PC-3 (cell line): ENCODE measurements at regions of chr2 and their contacts with region 1.

Region 1: DNA sequence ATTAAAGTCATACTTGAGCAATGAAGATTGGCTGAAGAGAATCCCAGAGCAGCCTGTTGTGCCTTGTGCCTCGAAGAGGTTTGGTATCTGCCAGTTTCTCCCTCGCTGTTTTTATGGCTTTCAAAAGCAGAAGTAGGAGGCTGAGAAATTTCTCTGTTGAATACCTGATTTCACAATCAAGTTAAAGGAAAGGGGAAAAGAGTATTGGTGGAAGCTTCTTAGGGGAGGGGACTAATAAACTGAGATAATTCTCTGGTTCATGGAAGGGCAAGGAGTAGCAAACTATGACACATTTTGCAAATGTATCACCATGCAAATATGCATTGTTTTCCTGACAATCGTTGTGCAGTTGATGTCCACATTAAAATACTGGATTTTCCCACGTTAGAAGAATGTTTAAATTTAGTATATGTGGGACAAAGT is at the start of gene IL1B:
- DNase-seq: peak; percentile 95
- ATAC-seq: peak; percentile 86
- H3K4me3 ChIP-seq: peak within 1 kb of the TSS; percentile 62
- H3K27ac ChIP-seq: peak within 1 kb of the TSS; percentile 96
- H3K4me1 ChIP-seq: peaks cover 52% of the 10 kb centered on the region
- H3K27me3 ChIP-seq: no peaks in the 10 kb centered on the region
- CTCF ChIP-seq: no peak
- total RNA-seq, gene IL1B: 48.4 and 67.5 TPM in 2 replicates

Region 2: GRCh38 chr2:112724591-112725525 is 111.8 kb before region 1 on chr2:
- CTCF ChIA-PET with region 1: no interaction called
- POLR2A ChIA-PET with region 1: no interaction called
- intact Hi-C with region 1: no loop called
- DNase-seq: peak; percentile 35
- ATAC-seq: peak; percentile 26; the same call in 1 of the 2 replicates
- H3K4me3 ChIP-seq: no peak overlapping the region
- H3K27ac ChIP-seq: peak overlapping the region; percentile 82
- H3K4me1 ChIP-seq: peaks cover 16% of the 10 kb centered on the region
- H3K27me3 ChIP-seq: no peaks in the 10 kb centered on the region
- CTCF ChIP-seq: peak; percentile 56

Region 3: DNA sequence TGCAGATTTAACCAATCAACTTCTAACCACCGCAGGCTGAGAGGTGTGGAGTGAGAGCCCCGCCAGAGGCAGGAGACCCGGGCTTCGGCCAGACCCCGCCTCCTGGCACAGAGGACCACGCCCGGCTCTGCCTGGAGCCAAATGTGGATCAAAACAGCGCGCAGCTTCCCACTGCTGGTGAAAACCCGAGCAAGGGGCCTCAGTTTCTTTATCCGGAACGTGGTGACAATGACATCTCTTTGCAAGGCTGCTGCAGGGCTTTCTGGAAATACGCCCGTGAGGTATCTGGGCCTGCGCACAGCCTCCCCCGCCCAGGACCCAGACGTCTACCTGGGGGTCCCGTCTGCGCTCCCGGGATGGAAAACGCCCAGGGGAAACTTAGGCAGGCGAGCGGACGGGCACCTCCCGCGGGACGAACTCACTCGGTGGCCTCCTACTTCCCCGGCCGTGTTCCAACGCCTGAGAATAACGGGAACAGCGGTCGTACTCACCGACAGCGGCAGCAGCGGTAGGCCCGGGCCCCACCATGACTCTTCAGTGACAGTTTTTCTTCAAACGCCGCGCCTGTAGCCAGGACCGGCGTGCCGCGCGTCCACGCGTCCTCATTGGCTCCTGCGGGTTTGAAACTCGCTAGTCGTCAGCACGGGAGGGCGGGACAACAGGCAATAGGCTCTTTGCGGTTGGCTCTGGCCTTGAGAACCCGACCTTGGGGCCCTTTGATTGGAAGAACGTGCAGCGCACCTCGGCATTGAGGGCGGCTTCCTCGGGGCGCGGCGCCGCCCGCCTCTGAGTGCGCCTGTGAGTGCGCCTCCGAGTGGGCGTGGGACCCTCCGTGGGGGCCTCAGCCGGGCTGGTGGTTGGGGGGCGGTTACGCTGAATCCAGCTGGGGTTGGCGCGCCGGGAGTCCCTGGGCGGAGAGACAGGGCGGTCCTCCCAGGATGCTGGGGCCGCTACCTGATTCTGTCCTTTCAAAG is 72.3 kb before region 1 on chr2 and contains the start of gene CKAP2L:
- CTCF ChIA-PET with region 1: no interaction called
- POLR2A ChIA-PET with region 1: no interaction called
- intact Hi-C with region 1: loop called (anchors 1 kb)
- DNase-seq: peak; percentile 99
- ATAC-seq: peak; percentile 92
- H3K4me3 ChIP-seq: peak within 1 kb of the TSS; percentile 92
- H3K27ac ChIP-seq: peak within 1 kb of the TSS; percentile 74
- H3K4me1 ChIP-seq: peaks cover 43% of the 10 kb centered on the region
- H3K27me3 ChIP-seq: no peaks in the 10 kb centered on the region
- CTCF ChIP-seq: no peak; the same call in 1 of the 2 replicates
- total RNA-seq, gene CKAP2L: 16.0 and 20.7 TPM in 2 replicates

Region 4: GRCh38 chr2:112803691-112804521 is 32.8 kb before region 1 on chr2:
- CTCF ChIA-PET with region 1: no interaction called
- POLR2A ChIA-PET with region 1: no interaction called
- intact Hi-C with region 1: loop called (anchors 2 kb)
- DNase-seq: peak; percentile 96
- ATAC-seq: peak; percentile 98
- H3K4me3 ChIP-seq: peak overlapping the region; percentile 19; the same call in 1 of the 2 replicates
- H3K27ac ChIP-seq: peak overlapping the region; percentile 93
- H3K4me1 ChIP-seq: peaks cover 26% of the 10 kb centered on the region
- H3K27me3 ChIP-seq: no peaks in the 10 kb centered on the region
- CTCF ChIP-seq: no peak

Region 5: GRCh38 chr2:112869258-112869885 is 32.7 kb after region 1 on chr2:
- CTCF ChIA-PET with region 1: interaction called, 4 read pairs
- POLR2A ChIA-PET with region 1: interaction called, 4 read pairs
- intact Hi-C with region 1: loop called (anchors 1 kb)
- DNase-seq: peak; percentile 98
- ATAC-seq: peak; percentile 94
- H3K4me3 ChIP-seq: peak overlapping the region; percentile 13; the same call in 1 of the 2 replicates
- H3K27ac ChIP-seq: peak overlapping the region; percentile 86
- H3K4me1 ChIP-seq: peaks cover 24% of the 10 kb centered on the region
- H3K27me3 ChIP-seq: no peaks in the 10 kb centered on the region
- CTCF ChIP-seq: no peak

Region 6: DNA sequence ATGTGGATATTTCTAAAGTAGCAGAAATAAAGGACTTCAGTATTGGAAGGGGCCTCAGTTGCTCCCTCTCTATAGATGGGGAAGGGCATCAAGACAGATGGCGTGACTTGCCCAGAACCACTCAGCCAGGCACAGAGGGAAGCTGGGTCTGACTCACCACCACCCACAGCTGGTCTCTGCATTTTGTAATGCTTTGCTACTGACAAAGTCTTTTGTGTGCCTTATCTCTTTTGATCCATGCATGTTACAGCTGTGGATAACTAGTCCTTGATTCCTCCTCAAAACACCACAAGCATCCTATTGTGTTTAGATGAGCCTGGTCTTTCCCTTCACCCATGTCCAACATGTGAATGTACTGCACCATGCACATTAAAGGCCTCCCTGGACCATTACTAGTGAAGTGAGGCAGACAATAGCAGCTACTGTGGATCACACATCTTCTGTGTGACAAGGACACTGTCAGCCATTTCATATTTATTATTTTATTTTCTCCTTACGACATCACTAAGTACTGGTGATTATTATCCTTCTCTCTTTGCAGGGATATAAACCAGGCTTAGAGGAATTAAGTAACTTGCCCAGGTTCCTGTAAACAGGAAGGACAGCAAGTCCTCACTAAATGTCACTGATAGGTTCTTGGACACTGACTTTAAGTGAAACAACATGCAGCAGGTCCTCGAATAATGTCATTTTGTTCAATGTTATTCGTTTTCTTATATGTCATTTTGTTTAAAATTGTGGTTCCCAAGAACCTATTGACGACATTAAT is 44.7 kb after region 1 on chr2:
- CTCF ChIA-PET with region 1: no interaction called
- POLR2A ChIA-PET with region 1: no interaction called
- intact Hi-C with region 1: loop called (anchors 2 kb)
- DNase-seq: peak; percentile 85
- ATAC-seq: peak; percentile 60
- H3K4me3 ChIP-seq: no peak overlapping the region
- H3K27ac ChIP-seq: peak overlapping the region; percentile 99
- H3K4me1 ChIP-seq: peaks cover 53% of the 10 kb centered on the region
- H3K27me3 ChIP-seq: no peaks in the 10 kb centered on the region
- CTCF ChIP-seq: no peak

Region 7: GRCh38 chr2:113041871-113042508 is 205.3 kb after region 1 on chr2:
- CTCF ChIA-PET with region 1: no interaction called
- POLR2A ChIA-PET with region 1: no interaction called
- intact Hi-C with region 1: no loop called
- DNase-seq: peak; percentile 47
- ATAC-seq: peak; percentile 73
- H3K4me3 ChIP-seq: no peak overlapping the region
- H3K27ac ChIP-seq: no peak overlapping the region
- H3K4me1 ChIP-seq: no peaks in the 10 kb centered on the region
- H3K27me3 ChIP-seq: no peaks in the 10 kb centered on the region
- CTCF ChIP-seq: peak; percentile 60